T-cell (primary cell): ENCODE measurements at regions of chr12 and their contacts with region 1.

Region 1: GRCh38 chr12:5171701-5172100 is 128.0 kb downstream of the KCNA5 start:
- DNase-seq: no peak
- ATAC-seq: no peak
- H3K4me3 ChIP-seq: no peak overlapping the region
- H3K4me3 Mint-ChIP-seq: no peak overlapping the region
- H3K27ac ChIP-seq: no peak overlapping the region
- H3K27ac Mint-ChIP-seq: no peak overlapping the region
- H3K4me1 ChIP-seq: no peaks in the 10 kb centered on the region
- H3K4me1 Mint-ChIP-seq: no peaks in the 10 kb centered on the region
- H3K27me3 ChIP-seq: peaks cover 0 to 11% of the 10 kb centered on the region in 2 experiments
- H3K27me3 Mint-ChIP-seq: peaks cover 4 to 26% of the 10 kb centered on the region in 2 donors

Region 2: GRCh38 chr12:3980504-3981272 is 1191.0 kb before region 1 on chr12:
- CTCF ChIA-PET with region 1: no interaction called
- POLR2A ChIA-PET with region 1: interaction called in 1 of 2 experiments, 10 read pairs
- DNase-seq: no peak
- ATAC-seq: no peak
- H3K4me3 ChIP-seq: no peak overlapping the region
- H3K4me3 Mint-ChIP-seq: no peak overlapping the region
- H3K27ac ChIP-seq: no peak overlapping the region
- H3K27ac Mint-ChIP-seq: no peak overlapping the region
- H3K4me1 ChIP-seq: peaks cover 19 to 22% of the 10 kb centered on the region in 2 experiments
- H3K4me1 Mint-ChIP-seq: peaks cover 32 to 39% (median 36%) of the 10 kb centered on the region in 3 donors
- H3K27me3 ChIP-seq: no peaks in the 10 kb centered on the region
- H3K27me3 Mint-ChIP-seq: no peaks in the 10 kb centered on the region

Region 3: DNA sequence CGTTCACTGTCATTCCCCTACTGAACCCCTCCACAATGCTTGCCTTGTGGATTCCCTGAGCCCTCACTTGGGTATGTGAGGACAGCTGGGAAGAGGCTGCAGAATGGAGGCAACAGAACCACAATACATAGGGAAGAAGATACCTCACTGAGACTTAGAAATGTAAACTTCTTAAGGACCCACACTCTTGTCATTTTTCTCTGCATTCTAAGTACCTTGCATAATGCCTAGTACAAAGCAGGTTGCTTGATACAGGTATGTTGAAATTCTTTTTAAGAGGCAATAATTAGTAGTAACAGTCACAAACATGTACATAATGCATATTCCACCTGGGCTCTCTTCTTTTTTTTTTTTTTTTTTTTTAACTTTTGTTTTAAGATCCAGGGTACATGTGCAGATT is 21.7 kb before region 1 on chr12:
- CTCF ChIA-PET with region 1: no interaction called
- POLR2A ChIA-PET with region 1: no interaction called
- DNase-seq: no peak
- ATAC-seq: no peak
- H3K4me3 ChIP-seq: no peak overlapping the region
- H3K4me3 Mint-ChIP-seq: no peak overlapping the region
- H3K27ac ChIP-seq: no peak overlapping the region
- H3K27ac Mint-ChIP-seq: no peak overlapping the region
- H3K4me1 ChIP-seq: no peaks in the 10 kb centered on the region
- H3K4me1 Mint-ChIP-seq: no peaks in the 10 kb centered on the region
- H3K27me3 ChIP-seq: peaks cover 3 to 16% of the 10 kb centered on the region in 2 experiments
- H3K27me3 Mint-ChIP-seq: peaks cover 24 to 29% of the 10 kb centered on the region in 2 donors